ENCODE measurements at regions of chr3 and their contacts with region 1.

Region 1: DNA sequence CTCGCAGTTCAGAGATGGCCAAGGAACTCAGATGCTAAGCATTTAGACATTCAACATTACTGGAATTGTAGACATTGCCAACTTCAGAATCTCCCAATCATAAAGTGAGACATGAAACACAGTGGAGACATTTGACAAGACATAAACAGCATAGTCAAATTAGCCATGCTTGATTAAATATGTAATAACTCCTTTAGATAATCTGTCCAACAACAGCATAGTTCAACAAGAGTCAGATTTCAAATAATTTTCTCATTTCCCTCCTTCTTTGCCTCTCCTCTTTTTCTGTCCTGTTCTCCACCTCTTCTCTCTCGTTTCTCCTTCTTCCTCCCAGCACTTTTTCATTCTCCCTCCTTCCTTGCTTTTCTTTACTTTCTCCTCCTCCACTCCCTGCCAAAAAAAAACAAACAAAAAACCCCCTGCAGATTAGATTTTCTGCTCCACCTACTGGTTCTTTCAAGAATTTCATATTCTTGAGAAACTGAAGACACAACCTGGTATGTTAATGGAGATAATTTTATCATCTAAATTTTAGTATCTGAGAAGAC is 20.2 kb downstream of the CPOX start:
- DNase-seq: no peak
- H3K4me3 Mint-ChIP-seq: peak overlapping the region; percentile 46
- H3K27ac Mint-ChIP-seq: peak overlapping the region; percentile 61
- H3K4me1 Mint-ChIP-seq: peaks cover 64% of the 10 kb centered on the region
- H3K27me3 Mint-ChIP-seq: no peaks in the 10 kb centered on the region

Region 2: DNA sequence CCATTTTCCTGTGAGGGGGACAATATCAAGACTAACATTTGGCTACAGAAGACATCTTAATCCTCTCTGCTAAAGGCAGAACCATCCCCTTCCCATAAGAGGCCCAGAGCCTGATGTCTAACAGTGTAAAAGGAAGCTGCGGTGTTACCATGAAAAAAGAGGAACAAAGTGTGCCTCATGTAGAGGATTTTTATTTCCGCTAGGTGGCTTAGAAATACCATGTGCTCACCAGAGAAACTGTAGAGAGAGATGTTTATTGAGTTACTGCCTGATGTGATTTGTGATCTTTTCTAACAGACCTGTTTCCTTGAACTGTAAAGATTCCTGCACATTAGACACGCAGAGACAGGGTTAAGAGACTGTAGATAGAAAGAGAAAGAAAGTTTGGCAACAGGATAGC is 384.7 kb before region 1 on chr3:
- intact Hi-C with region 1: loop called (anchors 5 kb)
- DNase-seq: no peak
- H3K4me3 Mint-ChIP-seq: no peak overlapping the region
- H3K27ac Mint-ChIP-seq: no peak overlapping the region
- H3K4me1 Mint-ChIP-seq: peaks cover 6% of the 10 kb centered on the region
- H3K27me3 Mint-ChIP-seq: peaks cover 2% of the 10 kb centered on the region

Region 3: DNA sequence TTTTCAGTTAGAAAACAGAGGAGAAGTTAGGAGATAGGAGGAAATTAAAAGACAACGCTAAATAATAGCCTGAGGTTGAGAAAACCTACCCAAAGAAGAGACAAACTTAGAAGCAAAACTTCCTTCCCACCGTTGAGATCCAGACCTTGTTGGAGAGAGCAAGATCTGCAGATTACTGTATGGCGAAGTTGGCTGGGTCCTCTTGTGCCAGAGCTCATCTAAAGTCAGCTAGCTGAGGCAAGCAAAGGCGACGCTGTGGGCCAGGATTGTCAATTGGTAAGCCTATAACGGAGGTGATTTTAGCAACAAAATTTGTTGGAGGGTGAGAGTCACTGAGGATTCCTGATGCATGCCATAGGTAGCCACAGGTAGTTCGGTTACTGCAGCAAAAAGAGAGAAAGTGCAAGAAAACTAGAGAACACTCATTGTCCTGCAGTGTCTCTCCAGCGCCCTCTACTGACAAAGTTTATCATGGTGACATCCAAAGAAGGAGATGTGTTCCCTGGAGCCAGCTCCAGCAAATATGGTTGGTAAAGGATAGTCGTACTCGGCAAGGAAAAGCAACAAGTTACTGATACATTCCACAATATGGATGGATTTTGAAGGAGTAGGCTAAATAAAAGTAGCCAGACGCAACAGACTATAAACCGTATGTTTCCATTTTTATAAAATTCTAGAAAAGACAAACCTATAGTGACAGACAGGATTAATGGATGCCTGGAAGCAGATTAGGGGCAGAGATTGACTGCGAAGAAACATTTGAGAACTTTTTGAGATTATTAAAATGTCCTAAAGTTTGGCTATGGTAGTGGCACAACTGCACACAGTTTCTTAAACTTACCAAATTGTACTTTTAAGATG is 229.4 kb before region 1 on chr3:
- intact Hi-C with region 1: loop called (anchors 1 kb)
- DNase-seq: no peak
- H3K4me3 Mint-ChIP-seq: no peak overlapping the region
- H3K27ac Mint-ChIP-seq: no peak overlapping the region
- H3K4me1 Mint-ChIP-seq: peaks cover 6% of the 10 kb centered on the region
- H3K27me3 Mint-ChIP-seq: peaks cover 53% of the 10 kb centered on the region